Activated CD8-positive, alpha-beta T cell treated with anti-CD3 and anti-CD28 coated beads, Interleukin-2, amount 10 ng/mL, durations not matched to agents 7 days and 5 days (primary cell): ENCODE measurements at regions of chr9 and their contacts with region 1.

Region 1: GRCh38 chr9:33415501-33416038 is 13.2 kb upstream of the AQP7 start:
- DNase-seq: peak; percentile 96
- ATAC-seq: peak; percentile 95
- H3K4me3 Mint-ChIP-seq: peak overlapping the region; percentile 48
- H3K27ac Mint-ChIP-seq: peak overlapping the region; percentile 94
- H3K4me1 Mint-ChIP-seq: peaks cover 50% of the 10 kb centered on the region
- H3K27me3 Mint-ChIP-seq: peaks cover 7% of the 10 kb centered on the region

Region 2: DNA sequence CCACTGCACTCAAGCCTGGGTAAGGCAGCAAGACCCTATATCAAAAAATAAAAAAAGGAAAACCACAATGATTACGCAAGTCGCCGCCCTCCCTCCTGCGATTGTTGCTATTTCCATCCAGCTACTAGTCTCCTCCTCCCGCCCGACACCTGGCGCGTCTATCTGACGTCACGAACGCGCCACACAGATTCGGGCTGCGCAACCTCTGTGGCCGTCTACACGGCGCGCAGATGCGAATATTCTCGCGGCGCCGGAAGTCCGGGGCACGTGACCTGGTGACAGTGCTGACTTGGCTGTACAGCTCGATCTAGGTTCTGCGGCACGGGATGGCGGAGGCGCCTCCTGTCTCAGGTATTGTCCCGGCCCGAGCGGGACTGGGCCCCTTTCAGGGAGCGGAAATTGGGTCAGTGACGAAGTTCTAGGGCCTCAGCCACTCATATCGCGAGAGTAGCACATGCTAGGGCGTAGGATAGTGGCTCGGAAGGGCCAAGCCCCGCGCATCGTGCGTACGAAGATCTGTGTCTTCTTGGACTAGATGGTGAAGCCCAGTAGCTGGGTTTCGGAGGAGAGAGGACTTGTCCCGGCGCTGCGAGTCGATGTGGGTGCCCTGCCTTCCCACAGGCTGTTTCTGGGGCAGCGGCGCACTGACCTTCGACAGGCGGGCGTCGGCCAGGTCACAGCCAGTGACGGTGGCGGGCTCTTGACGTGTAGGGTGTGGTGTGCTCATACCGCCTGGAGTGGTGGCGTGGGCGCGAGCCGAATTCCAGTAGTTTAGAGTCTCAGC is 125.1 kb before region 1 on chr9 and contains the start of gene NFX1:
- CTCF ChIA-PET with region 1: interaction called, 20 read pairs
- POLR2A ChIA-PET with region 1: interaction called, 10 read pairs
- DNase-seq: peak; percentile 99
- ATAC-seq: peak; percentile 91
- H3K4me3 Mint-ChIP-seq: peak within 1 kb of the TSS; percentile 97
- H3K27ac Mint-ChIP-seq: peak within 1 kb of the TSS; percentile 100
- H3K4me1 Mint-ChIP-seq: peaks cover 65% of the 10 kb centered on the region
- H3K27me3 Mint-ChIP-seq: no peaks in the 10 kb centered on the region
- total RNA-seq, gene NFX1: 38.8 to 39.8 TPM

Region 3: GRCh38 chr9:33404788-33405362 is 10.7 kb before region 1 on chr9:
- CTCF ChIA-PET with region 1: interaction called, 39 read pairs
- POLR2A ChIA-PET with region 1: interaction called, 6 read pairs
- DNase-seq: no peak
- ATAC-seq: no peak
- H3K4me3 Mint-ChIP-seq: no peak overlapping the region
- H3K27ac Mint-ChIP-seq: no peak overlapping the region
- H3K4me1 Mint-ChIP-seq: peaks cover 7% of the 10 kb centered on the region
- H3K27me3 Mint-ChIP-seq: peaks cover 5% of the 10 kb centered on the region

Region 4: GRCh38 chr9:33446946-33447798 is 31.6 kb after region 1 on chr9 and contains the start of gene AQP3:
- CTCF ChIA-PET with region 1: interaction called, 209 read pairs
- POLR2A ChIA-PET with region 1: interaction called, 33 read pairs
- DNase-seq: peak; percentile 80
- ATAC-seq: peak; percentile 78
- H3K4me3 Mint-ChIP-seq: peak within 1 kb of the TSS; percentile 89
- H3K27ac Mint-ChIP-seq: peak within 1 kb of the TSS; percentile 91
- H3K4me1 Mint-ChIP-seq: peaks cover 51% of the 10 kb centered on the region
- H3K27me3 Mint-ChIP-seq: no peaks in the 10 kb centered on the region
- total RNA-seq, gene AQP3: 29.9 to 31.4 TPM

Region 5: GRCh38 chr9:33458444-33458843 is 42.9 kb after region 1 on chr9:
- CTCF ChIA-PET with region 1: interaction called, 209 read pairs
- POLR2A ChIA-PET with region 1: interaction called, 12 read pairs
- DNase-seq: peak; percentile 57
- ATAC-seq: peak; percentile 60
- H3K4me3 Mint-ChIP-seq: peak overlapping the region; percentile 15
- H3K27ac Mint-ChIP-seq: peak overlapping the region; percentile 87
- H3K4me1 Mint-ChIP-seq: peaks cover 51% of the 10 kb centered on the region
- H3K27me3 Mint-ChIP-seq: no peaks in the 10 kb centered on the region

Region 6: DNA sequence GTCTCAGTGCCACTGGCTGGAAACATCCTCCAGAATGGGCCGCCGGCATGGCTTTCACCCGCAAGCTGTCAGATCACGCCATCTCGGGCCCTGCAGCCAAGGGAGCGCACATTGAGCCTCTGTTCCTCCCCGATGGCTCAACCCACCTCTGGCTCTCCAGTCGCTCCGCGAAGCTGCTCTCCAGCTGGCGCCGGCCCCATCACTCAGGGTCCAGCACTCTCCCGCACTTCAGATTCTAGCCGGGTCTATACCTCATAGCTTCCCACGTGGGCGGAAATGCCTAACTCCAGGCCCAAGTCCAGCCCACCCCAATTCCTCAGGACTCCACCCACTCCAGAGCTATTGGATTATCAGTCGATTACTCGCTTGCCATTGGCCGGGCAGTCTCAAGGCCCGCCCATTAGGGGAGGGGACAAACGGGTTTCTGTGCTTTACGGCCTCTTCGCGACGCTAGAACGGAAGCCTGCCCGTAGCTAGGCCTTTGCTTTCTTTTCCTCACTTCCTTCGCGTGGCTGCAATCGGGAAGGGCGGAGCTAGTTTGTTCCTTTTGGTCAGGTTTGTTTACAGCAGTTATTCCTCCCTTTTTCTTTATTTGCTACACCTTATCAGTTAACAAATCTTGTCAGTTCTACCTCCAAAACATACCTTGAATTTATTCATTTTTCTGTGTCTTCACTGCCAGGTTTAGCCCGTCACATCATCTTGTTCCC is 58.2 kb after region 1 on chr9 and contains the start of gene NOL6:
- CTCF ChIA-PET with region 1: interaction called, 94 read pairs
- POLR2A ChIA-PET with region 1: interaction called, 13 read pairs
- DNase-seq: peak; percentile 99
- ATAC-seq: peak; percentile 100
- H3K4me3 Mint-ChIP-seq: peak within 1 kb of the TSS; percentile 98
- H3K27ac Mint-ChIP-seq: peak within 1 kb of the TSS; percentile 95
- H3K4me1 Mint-ChIP-seq: peaks cover 28% of the 10 kb centered on the region
- H3K27me3 Mint-ChIP-seq: no peaks in the 10 kb centered on the region
- total RNA-seq, gene NOL6: 37.1 to 38.8 TPM

Region 7: GRCh38 chr9:33517373-33517772 is 101.8 kb after region 1 on chr9:
- CTCF ChIA-PET with region 1: no interaction called
- POLR2A ChIA-PET with region 1: no interaction called
- DNase-seq: no peak
- ATAC-seq: no peak
- H3K4me3 Mint-ChIP-seq: no peak overlapping the region
- H3K27ac Mint-ChIP-seq: no peak overlapping the region
- H3K4me1 Mint-ChIP-seq: no peaks in the 10 kb centered on the region
- H3K27me3 Mint-ChIP-seq: peaks cover 20% of the 10 kb centered on the region